Mucosa of descending colon (tissue), 3 donors: ENCODE measurements at regions of chr9 and their contacts with region 1.

Region 1: GRCh38 chr9:73411494-73411893 is 259.8 kb downstream of the ANXA1 start:
- DNase-seq: no peak
- ATAC-seq: no peak
- H3K4me3 ChIP-seq: no peak overlapping the region
- H3K4me1 ChIP-seq: no peaks in the 10 kb centered on the region
- CTCF ChIP-seq: no peak

Region 2: GRCh38 chr9:73219985-73220626 is 191.4 kb before region 1 on chr9:
- intact Hi-C with region 1: loop called in 1 of 2 experiments (anchors 10 kb)
- DNase-seq: no peak
- ATAC-seq: peak; percentile 47
- H3K4me3 ChIP-seq: no peak overlapping the region
- H3K4me1 ChIP-seq: no peaks in the 10 kb centered on the region
- CTCF ChIP-seq: no peak